ENCODE measurements at regions of chr16 and their contacts with region 1.

Region 1: GRCh38 chr16:66872943-66873684 is 7.2 kb upstream of the PDP2 start:
- DNase-seq: peak; percentile 93 to 96 (median 96)
- ATAC-seq: peak; percentile 95 to 96
- H3K4me3 ChIP-seq: peak overlapping the region; percentile 1
- H3K27ac ChIP-seq: peak overlapping the region; percentile 4
- H3K4me1 ChIP-seq: no peaks in the 10 kb centered on the region
- H3K27me3 ChIP-seq: no peaks in the 10 kb centered on the region

Region 2: DNA sequence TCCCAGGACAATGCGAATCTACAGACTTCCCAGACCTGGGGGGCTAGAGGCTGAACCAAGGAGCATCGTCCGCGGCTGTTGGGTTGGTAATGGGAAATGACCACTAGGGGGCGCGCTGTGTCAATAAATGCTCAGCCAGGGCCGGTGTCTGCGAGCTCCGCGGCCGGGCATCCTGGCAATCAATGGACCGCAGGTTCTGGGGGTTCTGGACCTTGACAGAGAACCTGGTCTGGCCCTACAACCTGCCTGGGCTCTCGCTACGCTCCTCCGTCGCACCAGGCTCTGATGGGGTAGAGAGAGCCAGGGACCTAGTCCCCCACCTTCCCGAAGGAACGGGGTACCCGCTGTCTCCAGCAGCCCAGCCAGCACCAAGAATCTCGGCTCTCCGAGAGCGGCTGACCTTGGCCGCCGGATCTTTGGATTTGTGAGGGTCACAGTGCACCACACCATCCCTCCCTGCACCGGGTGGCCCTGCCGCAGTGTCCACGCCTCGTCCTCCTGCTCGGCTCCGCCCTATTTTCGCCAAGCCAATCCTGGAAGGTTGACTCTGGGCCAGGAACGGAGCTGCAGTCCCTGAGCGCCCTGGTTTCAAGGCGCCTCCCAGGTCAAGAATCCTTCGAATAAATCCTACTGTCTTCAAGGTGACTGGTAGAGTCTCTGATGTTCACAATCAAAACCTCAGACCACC is 466.4 kb before region 1 on chr16:
- intact Hi-C with region 1: loop called in 1 of 4 experiments (anchors 5 kb)
- DNase-seq: peak; percentile 86 to 95 (median 93)
- ATAC-seq: peak; percentile 88 to 89
- H3K4me3 ChIP-seq: peak overlapping the region; percentile 60
- H3K27ac ChIP-seq: peak overlapping the region; percentile 56
- H3K4me1 ChIP-seq: peaks cover 3% of the 10 kb centered on the region
- H3K27me3 ChIP-seq: no peaks in the 10 kb centered on the region

Region 3: DNA sequence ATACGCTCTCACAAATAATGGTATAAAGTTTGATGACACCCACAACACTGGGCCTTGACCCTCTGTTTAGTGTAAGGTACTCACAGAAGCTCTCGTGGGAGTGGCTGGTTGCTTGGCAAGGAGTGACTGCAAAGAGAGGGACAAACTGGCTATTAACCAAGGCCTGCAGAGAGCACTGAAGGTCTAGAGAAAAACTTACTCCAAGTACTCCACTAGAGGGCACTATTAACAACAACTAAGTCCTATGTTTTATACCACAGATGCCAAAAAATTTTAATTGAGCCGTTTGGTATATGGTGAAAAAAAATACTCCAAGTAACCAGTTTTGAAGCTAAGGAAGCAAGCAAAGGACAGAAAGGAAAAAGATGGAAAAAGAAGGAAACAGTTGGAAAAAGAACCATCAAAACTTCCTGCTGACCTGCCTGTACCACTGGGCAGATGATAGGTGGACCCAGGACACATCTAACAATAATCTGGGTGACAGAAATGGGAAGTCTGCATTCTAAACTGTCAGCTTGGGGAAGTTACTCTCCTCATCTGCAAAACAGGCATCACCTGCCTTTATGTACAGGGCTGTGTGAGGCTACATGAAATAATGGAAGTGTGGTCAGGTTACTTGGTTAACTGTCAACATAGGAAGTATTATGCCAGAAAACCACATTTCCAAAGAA is 144.9 kb before region 1 on chr16:
- intact Hi-C with region 1: loop called in 1 of 4 experiments (anchors 2 kb)
- DNase-seq: peak in 2 of 3 donors; percentile 37 to 67
- ATAC-seq: peak; percentile 81 to 83
- H3K4me3 ChIP-seq: no peak overlapping the region
- H3K27ac ChIP-seq: no peak overlapping the region
- H3K4me1 ChIP-seq: no peaks in the 10 kb centered on the region
- H3K27me3 ChIP-seq: no peaks in the 10 kb centered on the region

Region 4: DNA sequence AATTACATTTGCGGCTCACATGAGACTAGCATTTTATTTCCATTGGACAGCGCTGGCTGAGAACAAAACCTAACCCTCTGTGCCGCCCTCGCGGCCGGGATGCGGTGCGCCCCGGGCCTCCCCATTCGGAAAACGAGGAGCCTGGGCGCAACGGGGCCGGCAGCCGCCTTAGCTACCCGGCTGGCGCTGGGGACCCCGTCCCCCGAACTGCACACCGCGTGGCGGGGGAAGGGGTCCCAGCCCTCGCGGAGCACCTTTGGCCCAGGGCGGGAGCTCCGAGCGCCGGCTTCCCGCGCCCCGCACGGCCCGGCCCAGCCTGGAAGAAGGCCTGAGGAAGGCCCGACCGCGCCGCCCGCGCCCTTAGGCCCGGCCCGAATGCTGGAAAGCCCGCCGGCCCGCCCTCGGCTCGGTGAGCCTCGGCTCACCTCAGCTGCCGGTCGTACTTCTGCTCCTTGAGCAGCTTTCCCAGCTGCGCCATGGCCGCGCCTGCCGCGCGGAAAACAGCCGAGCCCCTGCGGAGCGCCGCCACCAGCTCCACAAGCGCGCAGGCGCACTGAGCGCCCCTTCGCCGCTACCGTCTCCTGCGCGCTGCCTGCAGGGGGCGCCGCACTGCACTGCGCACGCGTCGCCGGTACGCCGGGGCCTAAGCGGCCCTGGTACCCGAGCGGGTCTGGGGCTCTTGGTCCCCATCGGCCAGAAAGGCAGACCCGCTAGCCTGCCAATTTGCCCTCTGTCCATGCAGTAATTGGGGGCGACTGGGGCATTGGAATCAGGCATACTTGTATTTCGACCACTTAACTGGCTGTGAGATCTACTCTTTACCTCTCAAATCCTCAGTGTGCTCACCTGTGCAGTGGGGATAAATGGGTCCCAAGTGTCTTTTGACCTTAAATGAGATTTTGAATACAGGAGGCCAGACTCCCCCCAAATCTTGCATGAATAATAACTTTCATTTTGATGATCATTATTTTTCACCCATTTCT is 42.4 kb before region 1 on chr16 and contains the start of gene NAE1:
- intact Hi-C with region 1: loop called in 2 of 4 experiments (anchors 2 to 5 kb)
- DNase-seq: peak; percentile 89 to 96 (median 95)
- ATAC-seq: peak; percentile 98
- H3K4me3 ChIP-seq: peak within 1 kb of the TSS; percentile 91
- H3K27ac ChIP-seq: peak within 1 kb of the TSS; percentile 90
- H3K4me1 ChIP-seq: no peaks in the 10 kb centered on the region
- H3K27me3 ChIP-seq: no peaks in the 10 kb centered on the region
- total RNA-seq, gene NAE1: 30.9 to 35.6 (median 32.6) TPM